Activated CD4-positive, alpha-beta T cell treated with anti-CD3 and anti-CD28 coated beads for 36 hours (primary cell): ENCODE measurements at regions of chr18 and their contacts with region 1.

Region 1: GRCh38 chr18:36572135-36572856 is 256.5 kb downstream of the TPGS2 start:
- DNase-seq: peak; percentile 60
- ATAC-seq: peak; percentile 51
- H3K4me3 Mint-ChIP-seq: no peak overlapping the region
- H3K27ac Mint-ChIP-seq: no peak overlapping the region
- H3K4me1 Mint-ChIP-seq: peaks cover 2% of the 10 kb centered on the region
- H3K27me3 Mint-ChIP-seq: peaks cover 2% of the 10 kb centered on the region

Region 2: DNA sequence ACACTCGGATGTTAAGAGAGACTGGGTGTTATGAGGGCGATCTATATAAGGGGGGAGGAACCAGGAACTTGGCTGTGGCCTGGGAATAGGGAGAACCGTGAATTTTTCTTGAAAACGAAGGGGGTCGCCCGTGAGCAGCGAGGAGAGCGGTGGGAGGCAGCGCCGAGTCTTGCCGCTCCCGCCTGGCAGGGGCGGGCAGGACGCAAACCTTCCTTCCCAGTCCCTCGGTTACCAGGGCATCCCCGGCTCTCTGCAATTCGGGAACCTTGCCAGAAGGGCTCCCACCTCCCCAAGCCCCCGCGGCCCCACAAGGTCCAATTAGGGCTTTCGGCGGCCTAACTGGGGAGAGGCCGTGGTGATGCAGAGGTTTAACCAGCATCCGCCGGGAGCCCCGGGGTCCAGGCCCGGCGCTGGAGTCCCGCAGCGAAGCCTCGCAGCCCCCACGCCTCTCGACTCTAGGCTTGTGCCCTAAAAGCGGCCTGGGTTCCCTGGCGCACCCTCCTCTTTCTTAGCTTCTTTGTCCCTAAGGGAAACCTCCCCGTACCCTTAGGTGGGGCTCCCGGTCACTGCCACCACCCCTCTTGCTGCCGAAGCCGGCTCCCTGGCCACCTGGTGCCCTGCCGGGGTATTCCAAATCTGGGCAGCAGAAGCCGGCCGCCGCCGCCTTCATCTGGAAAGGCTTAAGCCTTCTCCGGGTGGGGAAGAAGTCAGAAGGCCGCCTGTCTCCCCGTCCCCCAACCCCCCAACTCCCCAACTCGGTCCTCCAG is 275.5 kb before region 1 on chr18:
- CTCF ChIA-PET with region 1: no interaction called
- POLR2A ChIA-PET with region 1: no interaction called
- intact Hi-C with region 1: loop called in 1 of 2 experiments (anchors 5 kb)
- DNase-seq: peak; percentile 27
- ATAC-seq: no peak
- H3K4me3 Mint-ChIP-seq: peak overlapping the region; percentile 25
- H3K27ac Mint-ChIP-seq: no peak overlapping the region
- H3K4me1 Mint-ChIP-seq: no peaks in the 10 kb centered on the region
- H3K27me3 Mint-ChIP-seq: peaks cover 20% of the 10 kb centered on the region

Region 3: DNA sequence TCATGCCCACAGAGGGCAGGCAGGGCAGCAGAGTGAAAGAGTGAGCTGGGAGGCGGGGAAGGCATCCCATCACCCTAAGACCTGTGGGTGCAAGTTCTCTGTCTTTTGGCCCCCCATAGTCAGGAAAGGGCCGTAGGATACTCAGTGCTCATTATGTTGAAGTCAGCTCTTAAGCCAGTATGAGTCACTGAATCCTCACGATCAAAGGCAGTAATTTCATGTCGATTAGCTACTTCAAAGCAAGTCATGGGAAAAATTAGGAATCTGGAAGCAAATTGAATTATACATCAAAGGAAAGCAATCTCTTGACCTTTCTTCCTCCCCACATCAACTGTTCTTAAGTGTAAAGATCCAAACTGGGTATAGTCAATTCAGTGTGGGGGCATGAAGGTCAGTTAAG is 95.9 kb before region 1 on chr18:
- CTCF ChIA-PET with region 1: no interaction called
- POLR2A ChIA-PET with region 1: no interaction called
- intact Hi-C with region 1: loop called in 1 of 2 experiments (anchors 5 kb)
- DNase-seq: no peak
- ATAC-seq: no peak
- H3K4me3 Mint-ChIP-seq: no peak overlapping the region
- H3K27ac Mint-ChIP-seq: no peak overlapping the region
- H3K4me1 Mint-ChIP-seq: peaks cover 3% of the 10 kb centered on the region
- H3K27me3 Mint-ChIP-seq: peaks cover 12% of the 10 kb centered on the region

Region 4: GRCh38 chr18:36661999-36662398 is 89.7 kb after region 1 on chr18:
- CTCF ChIA-PET with region 1: no interaction called
- POLR2A ChIA-PET with region 1: no interaction called
- intact Hi-C with region 1: no loop called
- DNase-seq: no peak
- ATAC-seq: no peak
- H3K4me3 Mint-ChIP-seq: no peak overlapping the region
- H3K27ac Mint-ChIP-seq: no peak overlapping the region
- H3K4me1 Mint-ChIP-seq: no peaks in the 10 kb centered on the region
- H3K27me3 Mint-ChIP-seq: peaks cover 6% of the 10 kb centered on the region

Region 5: DNA sequence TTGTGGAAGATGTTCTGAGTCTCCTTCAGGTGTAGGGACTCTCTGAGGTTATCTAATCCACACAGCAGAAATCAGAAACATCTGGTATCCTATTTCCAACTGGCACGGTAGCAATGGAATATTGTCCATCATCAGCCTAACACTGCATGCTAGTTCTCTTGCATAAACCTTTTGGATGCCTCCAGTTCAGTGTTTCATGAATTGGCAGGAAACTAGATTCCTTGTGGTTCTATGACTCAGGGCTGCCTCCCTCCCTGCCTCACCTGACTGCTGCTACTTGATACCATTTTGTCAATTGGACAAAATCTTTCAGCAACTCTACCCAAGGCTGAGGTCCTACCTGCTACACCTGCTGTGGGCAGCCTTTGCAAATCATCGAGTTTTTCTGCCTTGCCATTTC is 125.6 kb after region 1 on chr18:
- CTCF ChIA-PET with region 1: no interaction called
- POLR2A ChIA-PET with region 1: no interaction called
- intact Hi-C with region 1: no loop called
- DNase-seq: no peak
- ATAC-seq: no peak
- H3K4me3 Mint-ChIP-seq: no peak overlapping the region
- H3K27ac Mint-ChIP-seq: no peak overlapping the region
- H3K4me1 Mint-ChIP-seq: no peaks in the 10 kb centered on the region
- H3K27me3 Mint-ChIP-seq: peaks cover 6% of the 10 kb centered on the region